CD8-positive, alpha-beta T cell (primary cell): ENCODE measurements at regions of chrX and their contacts with region 1.

Region 1: GRCh38 chrX:53003111-53003510 is 44.8 kb upstream of the FAM156A start:
- DNase-seq: no peak
- ATAC-seq: no peak
- H3K4me3 ChIP-seq: no peak overlapping the region
- H3K4me3 Mint-ChIP-seq: no peak overlapping the region
- H3K27ac ChIP-seq: no peak overlapping the region
- H3K27ac Mint-ChIP-seq: no peak overlapping the region
- H3K4me1 ChIP-seq: no peaks in the 10 kb centered on the region
- H3K4me1 Mint-ChIP-seq: peaks cover 2% of the 10 kb centered on the region
- H3K27me3 ChIP-seq: no peaks in the 10 kb centered on the region
- H3K27me3 Mint-ChIP-seq: peaks cover 14% of the 10 kb centered on the region
- CTCF ChIP-seq: no peak

Region 2: GRCh38 chrX:52988985-52989935 is 13.9 kb before region 1 on chrX:
- CTCF ChIA-PET with region 1: interaction called, 6 read pairs
- POLR2A ChIA-PET with region 1: no interaction called
- intact Hi-C with region 1: loop called in 1 of 2 experiments (anchors 1 kb)
- DNase-seq: peak in 1 of 9 experiments; percentile 21
- ATAC-seq: peak; percentile 17
- H3K4me3 ChIP-seq: no peak overlapping the region
- H3K4me3 Mint-ChIP-seq: no peak overlapping the region
- H3K27ac ChIP-seq: no peak overlapping the region
- H3K27ac Mint-ChIP-seq: peak overlapping the region; percentile 22
- H3K4me1 ChIP-seq: peaks cover 6% of the 10 kb centered on the region
- H3K4me1 Mint-ChIP-seq: peaks cover 18% of the 10 kb centered on the region
- H3K27me3 ChIP-seq: no peaks in the 10 kb centered on the region
- H3K27me3 Mint-ChIP-seq: no peaks in the 10 kb centered on the region
- CTCF ChIP-seq: no peak